Ascending aorta (tissue), 2 donors: ENCODE measurements at regions of chr15 and their contacts with region 1.

Region 1: GRCh38 chr15:92714477-92715401 is 59.2 kb upstream of the FAM174B start:
- DNase-seq: peak in 1 of 2 donors; percentile 80
- H3K4me3 ChIP-seq: peak overlapping the region; percentile 64 to 70
- H3K27ac ChIP-seq: peak overlapping the region; percentile 62 to 83
- H3K4me1 ChIP-seq: no peaks in the 10 kb centered on the region
- H3K27me3 ChIP-seq: no peaks in the 10 kb centered on the region
- CTCF ChIP-seq: peak; percentile 73 to 91 (median 77)

Region 2: GRCh38 chr15:92097474-92098178 is 617.1 kb before region 1 on chr15:
- intact Hi-C with region 1: loop called (anchors 10 kb)
- DNase-seq: no peak
- H3K4me3 ChIP-seq: no peak overlapping the region
- H3K27ac ChIP-seq: no peak overlapping the region
- H3K4me1 ChIP-seq: no peaks in the 10 kb centered on the region
- H3K27me3 ChIP-seq: no peaks in the 10 kb centered on the region
- CTCF ChIP-seq: peak; percentile 31 to 63 (median 35)

Region 3: DNA sequence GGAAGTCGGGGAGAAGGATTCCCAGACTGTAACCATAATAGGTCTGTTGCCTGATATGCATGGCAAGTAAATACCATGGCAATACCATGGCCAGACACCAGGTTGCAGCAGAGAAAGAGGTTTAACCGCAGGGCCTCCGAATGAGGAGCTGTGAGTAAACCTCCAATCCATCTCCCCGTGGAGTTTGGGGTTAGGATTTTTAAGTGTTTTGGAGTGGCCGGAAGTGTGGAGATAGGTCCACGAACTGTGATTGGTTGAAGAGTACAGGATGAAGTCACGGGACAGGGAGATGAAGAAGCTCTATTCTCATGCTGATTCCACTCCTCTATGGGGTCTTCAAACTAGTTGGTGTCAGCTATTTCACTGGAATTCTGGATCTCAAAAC is 193.1 kb before region 1 on chr15:
- intact Hi-C with region 1: loop called (anchors 1 kb)
- DNase-seq: peak in 1 of 2 donors; percentile 87
- H3K4me3 ChIP-seq: no peak overlapping the region
- H3K27ac ChIP-seq: no peak overlapping the region
- H3K4me1 ChIP-seq: no peaks in the 10 kb centered on the region
- H3K27me3 ChIP-seq: no peaks in the 10 kb centered on the region
- CTCF ChIP-seq: peak; percentile 63 to 85 (median 76)

Region 4: DNA sequence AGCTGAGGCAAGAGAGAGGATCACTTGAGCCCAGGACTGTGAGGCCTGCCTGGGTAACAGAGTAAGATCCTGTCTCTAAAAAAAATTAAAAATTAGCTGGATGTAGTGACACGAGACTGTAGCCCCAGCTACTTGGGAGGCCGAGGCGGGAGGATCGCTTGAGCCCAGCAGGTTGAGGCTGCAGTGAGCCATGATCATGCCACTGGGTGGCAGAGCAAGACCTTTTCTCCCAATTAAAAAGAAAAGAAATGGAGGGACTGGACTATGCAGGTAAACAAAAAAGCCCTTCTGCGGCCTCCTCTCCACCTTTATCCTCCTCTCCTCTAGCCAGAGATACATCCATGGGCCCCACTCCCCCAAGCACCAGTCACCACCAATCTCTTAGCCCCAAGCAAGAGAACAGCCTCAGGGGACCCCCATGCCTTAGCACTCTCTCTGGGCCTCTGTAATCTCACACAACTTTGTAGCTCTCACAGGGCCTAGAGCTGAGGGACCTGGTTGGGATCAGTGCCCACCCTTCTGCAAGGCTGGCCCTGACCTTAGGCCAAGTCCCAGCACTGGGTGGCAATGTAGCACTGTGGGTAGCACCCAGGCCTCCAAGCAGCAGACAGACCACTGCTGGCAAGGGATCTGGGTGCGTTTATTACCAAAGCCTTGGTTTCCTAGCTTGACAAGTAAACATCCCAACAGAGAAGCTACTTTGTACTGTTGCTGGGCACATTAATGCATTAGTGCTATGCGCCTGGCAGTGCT is 102.6 kb before region 1 on chr15:
- intact Hi-C with region 1: loop called (anchors 5 kb)
- DNase-seq: no peak
- H3K4me3 ChIP-seq: no peak overlapping the region
- H3K27ac ChIP-seq: no peak overlapping the region
- H3K4me1 ChIP-seq: no peaks in the 10 kb centered on the region
- H3K27me3 ChIP-seq: no peaks in the 10 kb centered on the region
- CTCF ChIP-seq: peak in 1 of 3 experiments; percentile 10